GM18951 (cell line): ENCODE measurements at regions of chr2 and their contacts with region 1.

Region 1: DNA sequence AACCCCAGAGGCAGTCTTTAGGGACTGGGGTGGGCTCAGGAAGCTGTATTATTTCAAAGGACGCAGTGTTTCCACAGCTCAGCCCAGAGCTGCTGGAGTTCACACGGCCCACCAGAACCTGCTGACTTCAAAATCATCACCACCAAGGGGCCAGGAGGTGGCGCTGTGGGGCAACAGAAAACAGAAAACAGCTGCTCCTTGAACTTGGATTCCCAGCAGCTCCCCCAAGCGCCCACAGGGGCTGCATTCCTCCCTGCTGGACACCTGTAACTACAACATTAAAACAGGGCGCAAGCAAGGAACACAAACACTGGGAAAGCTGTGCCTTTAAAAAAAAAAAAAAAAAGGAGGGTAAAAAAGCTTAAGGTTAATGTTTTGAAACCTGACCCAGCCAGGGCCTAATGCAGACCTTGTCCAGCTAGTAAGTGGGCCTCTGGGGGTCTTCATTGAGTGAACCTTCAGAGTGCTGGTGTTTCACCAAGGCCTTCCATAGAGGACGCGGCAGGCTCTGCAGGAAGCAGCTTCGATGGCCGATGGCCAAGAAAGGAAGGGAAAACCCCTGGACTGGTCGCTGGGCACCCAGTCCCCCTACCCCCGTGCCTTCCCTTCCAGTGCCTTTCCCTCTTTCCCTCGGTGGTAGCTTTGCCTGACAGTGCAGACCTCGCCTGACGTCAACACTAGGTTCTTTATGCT is 25.9 kb downstream of the MLPH start:
- POLR2A ChIP-seq: no peak

Region 2: DNA sequence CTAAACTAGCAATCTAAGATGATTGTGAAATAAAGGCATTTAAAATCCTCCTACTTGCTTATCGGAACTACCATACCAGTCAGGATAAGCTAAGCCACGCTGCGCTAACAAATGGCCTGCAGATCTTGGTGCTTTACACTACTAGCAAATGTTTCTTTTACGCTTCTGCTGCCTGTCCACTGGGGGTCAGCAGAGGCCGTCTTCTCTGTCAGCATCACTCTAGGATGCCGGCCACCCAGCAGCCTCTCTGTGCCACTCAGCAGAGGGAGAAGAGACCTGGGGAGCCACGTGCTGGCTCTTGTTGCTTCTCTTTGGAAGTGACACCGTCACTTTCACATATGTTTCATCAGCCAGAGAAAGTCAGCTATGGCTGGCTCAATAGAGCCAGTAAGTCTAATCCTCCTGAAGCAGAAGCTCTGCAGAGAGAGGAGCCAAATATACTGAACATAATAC is 390.7 kb before region 1 on chr2:
- in situ Hi-C with region 1: no loop called
- POLR2A ChIP-seq: no peak

Region 3: GRCh38 chr2:237572021-237572741 is 59.3 kb after region 1 on chr2:
- in situ Hi-C with region 1: loop called (anchors 5 kb)
- POLR2A ChIP-seq: no peak